Dendritic cell treated with granulocyte-macrophage colony-stimulating factor and Interleukin-4, amounts not matched to agents 40 ng/mL and 50 ng/mL, for 4 days (primary cell): ENCODE measurements at regions of chr22 and their contacts with region 1.

Region 1: GRCh38 chr22:31489604-31490495 is at the start of gene EIF4ENIF1:
- H3K4me3 Mint-ChIP-seq: peak within 1 kb of the TSS; percentile 96
- H3K27ac Mint-ChIP-seq: peak within 1 kb of the TSS; percentile 95
- H3K4me1 Mint-ChIP-seq: peaks cover 18% of the 10 kb centered on the region
- H3K27me3 Mint-ChIP-seq: no peaks in the 10 kb centered on the region

Region 2: GRCh38 chr22:31290494-31291471 is 199.1 kb before region 1 on chr22:
- intact Hi-C with region 1: loop called (anchors 10 kb)
- H3K4me3 Mint-ChIP-seq: peak overlapping the region; percentile 96
- H3K27ac Mint-ChIP-seq: peak overlapping the region; percentile 97
- H3K4me1 Mint-ChIP-seq: peaks cover 78% of the 10 kb centered on the region
- H3K27me3 Mint-ChIP-seq: no peaks in the 10 kb centered on the region

Region 3: GRCh38 chr22:31399211-31400028 is 90.4 kb before region 1 on chr22 and contains the start of gene DRG1:
- intact Hi-C with region 1: loop called (anchors 5 kb)
- H3K4me3 Mint-ChIP-seq: peak within 1 kb of the TSS; percentile 85
- H3K27ac Mint-ChIP-seq: peak within 1 kb of the TSS; percentile 90
- H3K4me1 Mint-ChIP-seq: peaks cover 7% of the 10 kb centered on the region
- H3K27me3 Mint-ChIP-seq: peaks cover under 1% of the 10 kb centered on the region

Region 4: DNA sequence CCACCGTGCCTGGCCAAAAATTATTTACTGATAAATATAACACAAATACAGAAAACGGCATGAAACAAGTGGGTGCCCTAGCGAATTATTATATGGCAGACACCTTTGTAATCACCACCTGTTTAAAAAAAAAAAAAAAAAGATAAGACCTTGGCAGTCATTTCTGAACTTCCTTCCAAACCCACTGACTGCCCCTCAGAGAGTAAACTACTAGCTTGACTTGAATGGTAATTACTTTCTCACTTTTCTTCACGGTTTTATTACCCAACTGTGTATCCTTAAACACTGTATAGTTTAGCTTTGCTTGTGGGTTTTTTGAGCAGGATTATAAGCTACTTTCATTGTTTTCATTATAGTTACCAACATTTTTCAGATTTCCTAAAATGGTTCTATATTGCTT is 30.2 kb after region 1 on chr22:
- intact Hi-C with region 1: no loop called
- H3K4me3 Mint-ChIP-seq: no peak overlapping the region
- H3K27ac Mint-ChIP-seq: no peak overlapping the region
- H3K4me1 Mint-ChIP-seq: peaks cover 6% of the 10 kb centered on the region
- H3K27me3 Mint-ChIP-seq: no peaks in the 10 kb centered on the region

Region 5: DNA sequence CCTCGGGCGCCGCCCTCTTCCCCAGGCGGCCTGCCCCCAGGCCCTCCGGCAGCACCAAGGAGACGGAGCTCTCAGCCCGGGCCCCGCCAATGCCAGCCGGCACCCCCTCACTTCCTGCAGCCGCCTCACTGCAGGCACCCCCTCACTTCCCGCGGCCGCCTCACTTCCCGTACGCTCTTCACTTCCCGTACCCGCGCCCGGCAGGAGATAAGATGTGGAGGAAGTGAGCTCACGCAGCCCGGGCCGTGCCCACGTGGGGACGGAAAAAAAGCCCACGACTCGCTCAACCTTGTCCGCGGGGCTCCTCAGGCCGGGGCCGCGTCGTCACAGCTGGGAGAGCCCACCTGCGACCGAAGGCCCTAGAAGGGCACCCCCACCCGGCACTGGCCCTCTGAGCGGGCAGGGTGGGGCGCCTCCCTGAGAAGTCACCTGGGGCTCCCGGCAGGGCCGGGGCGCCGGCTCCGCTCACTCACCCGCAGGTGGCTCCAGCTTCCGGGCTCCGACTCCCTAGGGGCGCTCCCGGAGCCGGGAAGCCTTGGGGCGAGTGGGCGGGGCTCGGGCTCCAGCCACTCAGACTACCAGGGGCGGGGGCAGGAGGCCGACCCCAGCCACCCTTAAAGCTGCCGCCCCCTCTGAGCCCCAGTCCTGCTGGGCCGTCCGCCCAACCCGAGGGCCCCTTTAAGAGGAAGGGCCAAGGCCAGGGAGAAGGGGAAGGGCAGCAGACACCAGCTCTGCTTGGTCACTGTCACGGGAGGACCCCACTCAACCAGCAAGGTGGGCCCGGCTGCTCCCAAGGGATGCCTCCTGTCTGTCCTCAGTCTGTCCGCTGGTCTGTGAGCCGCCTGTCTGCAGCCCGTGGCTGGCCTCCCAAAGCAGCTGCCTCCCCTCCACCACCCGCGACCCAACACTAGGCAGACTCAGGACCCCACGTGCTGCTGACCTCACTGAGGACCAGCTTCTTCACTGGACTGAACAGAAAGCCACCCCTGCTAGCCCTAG is 140.8 kb after region 1 on chr22:
- intact Hi-C with region 1: loop called (anchors 5 kb)
- H3K4me3 Mint-ChIP-seq: peak overlapping the region; percentile 84
- H3K27ac Mint-ChIP-seq: peak overlapping the region; percentile 78
- H3K4me1 Mint-ChIP-seq: peaks cover 84% of the 10 kb centered on the region
- H3K27me3 Mint-ChIP-seq: no peaks in the 10 kb centered on the region